ENCODE measurements at regions of chr1 and their contacts with region 1.

Region 1: DNA sequence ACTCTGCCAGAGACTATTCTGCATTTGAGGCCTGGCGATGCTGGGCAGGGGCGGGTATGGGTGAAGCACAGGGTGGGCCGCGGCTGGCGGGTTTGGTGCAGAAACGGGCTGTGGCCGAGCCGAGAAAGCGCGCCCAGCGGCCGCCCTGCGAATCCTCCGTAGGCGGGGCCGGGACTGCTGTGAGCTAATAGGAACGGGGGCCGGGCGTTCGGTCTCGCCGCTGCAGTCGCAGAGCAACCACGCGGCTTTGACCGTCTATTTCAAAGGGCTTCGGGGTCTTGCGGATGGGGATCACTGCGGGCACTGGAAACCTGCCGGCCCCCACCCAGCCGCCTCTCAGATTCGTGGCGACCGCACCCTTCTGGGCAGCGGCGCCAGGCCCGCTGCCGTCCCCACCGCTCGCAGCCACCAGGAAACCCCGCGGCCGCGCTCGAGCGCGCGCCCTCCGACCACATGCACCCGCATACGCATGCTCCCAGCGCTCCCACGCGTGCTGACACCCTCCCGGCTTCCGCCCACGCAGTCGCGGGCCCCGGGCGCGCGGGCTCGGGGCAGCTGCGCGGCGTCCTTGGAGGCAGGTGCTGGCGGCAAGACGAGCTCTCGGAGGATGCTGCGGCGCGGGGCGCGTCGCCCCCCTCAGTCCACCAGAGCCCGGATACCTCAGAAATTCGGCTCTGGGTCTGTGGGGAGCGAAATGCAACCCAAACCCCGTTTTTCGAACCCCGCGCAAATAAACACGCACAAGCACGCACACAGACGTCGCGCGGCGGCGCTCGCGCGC is 32.6 kb downstream of the DNTTIP2 start:
- DNase-seq: peak; percentile 78 to 91 (median 89)
- ATAC-seq: peak; percentile 71
- H3K4me3 ChIP-seq: peak overlapping the region; percentile 90
- H3K4me3 Mint-ChIP-seq: peak overlapping the region; percentile 86 to 97 (median 91)
- H3K27ac ChIP-seq: peak overlapping the region; percentile 88
- H3K27ac Mint-ChIP-seq: peak overlapping the region; percentile 86 to 100 (median 96)
- H3K4me1 ChIP-seq: peaks cover 4 to 16% of the 10 kb centered on the region in 2 donors
- H3K4me1 Mint-ChIP-seq: peaks cover 15 to 36% (median 24%) of the 10 kb centered on the region in 7 donors
- H3K27me3 ChIP-seq: no peaks in the 10 kb centered on the region
- H3K27me3 Mint-ChIP-seq: peaks cover 0 to 13% (median 0%) of the 10 kb centered on the region in 5 donors

Region 2: DNA sequence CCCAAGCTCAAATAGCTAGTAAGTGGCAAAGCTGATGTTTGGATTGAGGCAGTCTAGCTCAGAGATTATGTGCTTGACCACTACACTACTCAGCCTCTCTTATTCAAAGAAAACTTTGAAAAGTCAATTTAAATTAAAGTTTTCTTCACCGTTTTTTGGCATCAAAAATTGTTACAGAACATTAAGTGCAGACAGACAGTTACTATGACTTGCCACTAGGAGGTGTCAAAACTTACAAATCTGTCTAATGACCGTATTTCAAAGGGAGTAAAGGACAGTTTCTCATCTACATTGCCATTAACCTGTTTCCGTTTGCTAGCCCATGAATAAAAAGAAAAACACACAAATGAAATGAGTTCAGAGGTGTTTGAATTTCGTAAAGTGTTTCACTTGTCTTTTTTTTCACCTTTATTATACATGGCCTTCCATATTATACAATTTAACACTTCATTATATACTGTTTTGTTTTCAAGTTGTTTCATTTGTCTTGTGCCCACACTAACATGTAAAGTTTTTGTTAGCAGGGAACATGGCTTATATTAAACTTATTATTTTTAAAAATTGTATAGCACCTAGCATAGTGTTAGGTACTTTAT is 824.8 kb before region 1 on chr1:
- CTCF ChIA-PET with region 1: no interaction called
- POLR2A ChIA-PET with region 1: interaction called, 3 read pairs
- intact Hi-C with region 1: loop called in 1 of 2 experiments (anchors 1 kb)
- DNase-seq: peak in 7 of 9 donors; percentile 16 to 64 (median 55)
- ATAC-seq: peak; percentile 78
- H3K4me3 ChIP-seq: no peak overlapping the region
- H3K4me3 Mint-ChIP-seq: no peak overlapping the region
- H3K27ac ChIP-seq: no peak overlapping the region
- H3K27ac Mint-ChIP-seq: no peak overlapping the region
- H3K4me1 ChIP-seq: peaks cover 0 to 4% of the 10 kb centered on the region in 2 donors
- H3K4me1 Mint-ChIP-seq: peaks cover 0 to 7% (median 5%) of the 10 kb centered on the region in 7 donors
- H3K27me3 ChIP-seq: no peaks in the 10 kb centered on the region
- H3K27me3 Mint-ChIP-seq: peaks cover 0 to 48% (median 3%) of the 10 kb centered on the region in 5 donors

Region 3: GRCh38 chr1:93179886-93180722 is 666.3 kb before region 1 on chr1 and contains the start of gene TMED5:
- CTCF ChIA-PET with region 1: no interaction called
- POLR2A ChIA-PET with region 1: no interaction called
- intact Hi-C with region 1: loop called (anchors 1 to 2 kb)
- DNase-seq: peak; percentile 94 to 97 (median 96)
- ATAC-seq: peak; percentile 89
- H3K4me3 ChIP-seq: peak within 1 kb of the TSS; percentile 95
- H3K4me3 Mint-ChIP-seq: peak within 1 kb of the TSS; percentile 91 to 98 (median 94)
- H3K27ac ChIP-seq: peak within 1 kb of the TSS; percentile 91
- H3K27ac Mint-ChIP-seq: peak within 1 kb of the TSS; percentile 86 to 99 (median 97)
- H3K4me1 ChIP-seq: peaks cover 24 to 30% of the 10 kb centered on the region in 2 donors
- H3K4me1 Mint-ChIP-seq: peaks cover 30 to 59% (median 47%) of the 10 kb centered on the region in 7 donors
- H3K27me3 ChIP-seq: no peaks in the 10 kb centered on the region
- H3K27me3 Mint-ChIP-seq: no peaks in the 10 kb centered on the region
- total RNA-seq, gene TMED5: 37.8 to 60.0 (median 47.4) TPM

Region 4: DNA sequence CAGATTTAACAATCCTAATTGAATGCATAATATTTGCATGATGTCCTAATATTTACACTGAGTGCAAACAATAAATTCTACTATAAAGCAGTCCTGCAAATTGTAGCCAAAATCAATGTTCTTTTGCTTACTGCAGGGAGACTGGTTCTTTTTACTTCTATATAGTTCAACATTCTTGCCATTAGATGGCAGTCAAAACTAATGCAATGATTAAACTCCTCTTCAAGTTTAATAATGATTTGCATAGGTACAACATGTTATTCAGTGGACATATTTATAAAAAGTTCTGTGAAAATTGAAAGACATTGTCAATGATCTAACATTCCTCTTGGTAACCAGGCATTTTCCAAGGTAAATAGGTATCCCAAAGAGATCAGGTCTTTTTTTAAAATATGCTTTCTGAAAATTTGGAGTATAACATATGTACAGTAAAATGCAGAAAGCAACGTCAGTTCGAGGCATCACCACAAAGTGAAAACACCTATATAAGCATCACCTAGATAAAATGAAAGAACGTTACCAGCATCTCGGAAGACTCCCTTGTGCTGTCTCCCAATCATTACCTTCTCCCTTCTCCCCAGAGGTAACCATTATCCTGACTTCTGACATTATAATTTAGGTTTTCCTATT is 408.3 kb before region 1 on chr1:
- CTCF ChIA-PET with region 1: interaction called, 3 read pairs
- POLR2A ChIA-PET with region 1: no interaction called
- intact Hi-C with region 1: loop called (anchors 1 to 2 kb)
- DNase-seq: peak in 5 of 9 donors; percentile 24 to 48 (median 27)
- ATAC-seq: peak; percentile 61
- H3K4me3 ChIP-seq: no peak overlapping the region
- H3K4me3 Mint-ChIP-seq: no peak overlapping the region
- H3K27ac ChIP-seq: no peak overlapping the region
- H3K27ac Mint-ChIP-seq: no peak overlapping the region
- H3K4me1 ChIP-seq: no peaks in the 10 kb centered on the region
- H3K4me1 Mint-ChIP-seq: peaks cover 0 to 2% (median 0%) of the 10 kb centered on the region in 7 donors
- H3K27me3 ChIP-seq: peaks cover 0 to 4% of the 10 kb centered on the region in 2 donors
- H3K27me3 Mint-ChIP-seq: peaks cover 0 to 35% (median 7%) of the 10 kb centered on the region in 5 donors

Region 5: DNA sequence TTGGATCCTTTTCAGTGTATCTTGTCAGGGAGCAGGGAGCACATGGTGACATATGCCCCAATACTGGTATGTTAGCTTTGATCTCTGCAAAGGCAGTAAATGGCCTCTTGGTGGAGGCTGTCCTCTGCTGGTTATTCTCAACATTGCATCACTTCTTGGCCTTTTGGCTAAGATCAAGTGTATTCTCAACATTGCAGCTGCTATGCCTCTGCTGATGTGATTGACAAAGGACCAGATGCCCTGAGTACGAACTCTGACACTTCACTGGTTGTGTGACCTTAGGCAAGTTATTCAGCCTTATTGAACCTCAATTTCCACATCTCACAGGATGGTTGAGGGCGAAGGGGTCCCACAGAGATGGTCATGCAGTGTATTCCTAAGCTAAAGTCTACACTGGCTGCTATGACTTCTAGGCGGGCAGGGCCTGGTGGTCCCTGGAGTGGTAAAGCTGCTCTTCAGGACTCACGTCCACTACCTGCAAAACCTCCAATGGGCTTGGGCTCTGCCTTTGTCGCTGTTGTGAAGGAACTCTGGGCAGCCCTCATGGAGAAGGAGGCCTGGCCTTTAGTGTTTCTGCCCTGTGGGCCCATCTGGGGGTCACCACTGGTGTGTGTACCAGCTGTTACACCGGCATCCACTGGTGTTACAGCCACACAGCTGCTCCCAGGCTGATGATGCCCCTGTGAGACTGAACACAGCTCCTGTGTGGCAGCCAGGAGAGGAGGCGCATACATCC is 32.2 kb before region 1 on chr1:
- CTCF ChIA-PET with region 1: interaction called, 8 read pairs
- POLR2A ChIA-PET with region 1: interaction called, 3 read pairs
- intact Hi-C with region 1: loop called (anchors 2 kb)
- DNase-seq: peak in 8 of 9 donors; percentile 18 to 55 (median 36)
- ATAC-seq: peak; percentile 70
- H3K4me3 ChIP-seq: no peak overlapping the region
- H3K4me3 Mint-ChIP-seq: no peak overlapping the region
- H3K27ac ChIP-seq: no peak overlapping the region
- H3K27ac Mint-ChIP-seq: no peak overlapping the region
- H3K4me1 ChIP-seq: peaks cover 0 to 11% of the 10 kb centered on the region in 2 donors
- H3K4me1 Mint-ChIP-seq: peaks cover 19 to 23% (median 21%) of the 10 kb centered on the region in 7 donors
- H3K27me3 ChIP-seq: no peaks in the 10 kb centered on the region
- H3K27me3 Mint-ChIP-seq: peaks cover 0 to 2% (median 0%) of the 10 kb centered on the region in 5 donors

Region 6: DNA sequence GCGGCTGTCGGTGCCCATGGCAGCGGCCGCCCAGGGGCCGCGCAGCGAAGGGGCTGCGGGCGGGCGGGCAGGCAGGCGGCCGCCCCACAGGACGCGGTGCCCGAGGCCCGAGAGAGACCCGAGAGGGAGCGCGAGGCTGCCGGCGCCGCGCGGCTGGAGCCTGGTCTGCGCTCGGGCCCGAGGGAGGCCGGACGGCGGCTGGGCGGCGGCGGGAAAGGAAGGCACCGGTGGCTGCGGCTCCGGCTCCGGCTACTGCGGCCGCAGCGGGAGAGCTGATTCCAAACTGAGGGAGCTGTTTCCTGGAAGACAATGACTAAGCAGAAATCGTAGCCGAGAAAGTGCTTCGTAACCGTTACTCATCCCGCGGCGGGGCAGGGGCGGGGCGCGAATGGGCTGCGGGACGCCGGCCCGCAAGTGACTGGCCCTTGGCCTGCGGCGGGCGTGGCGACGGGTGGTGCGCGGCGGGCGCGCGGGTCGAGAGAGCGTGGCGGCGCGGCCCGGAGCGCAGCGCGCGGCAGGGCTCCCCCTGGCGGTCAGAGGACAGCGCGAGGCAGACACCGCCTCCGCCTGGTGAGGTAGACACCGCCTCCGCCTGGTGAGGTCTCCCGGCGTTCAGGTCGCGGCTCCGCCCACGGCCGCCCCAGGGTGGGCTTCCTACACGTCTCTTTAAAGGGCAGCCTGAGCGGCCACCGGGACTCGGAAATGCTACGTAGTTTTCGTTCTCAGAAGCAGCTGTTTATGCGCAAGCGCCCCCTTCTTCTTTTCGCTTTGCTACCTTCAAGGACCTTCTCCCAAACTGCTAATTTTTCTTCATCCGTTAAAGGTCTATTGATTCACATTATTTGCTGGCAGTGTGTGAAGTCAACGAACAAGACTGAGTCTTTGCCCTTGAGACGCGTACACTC is 63.0 kb after region 1 on chr1 and contains the start of gene GCLM:
- CTCF ChIA-PET with region 1: interaction called, 19 read pairs
- POLR2A ChIA-PET with region 1: interaction called, 26 read pairs
- intact Hi-C with region 1: loop called (anchors 1 kb)
- DNase-seq: peak; percentile 81 to 97 (median 88)
- ATAC-seq: peak; percentile 98
- H3K4me3 ChIP-seq: peak within 1 kb of the TSS; percentile 61
- H3K4me3 Mint-ChIP-seq: peak within 1 kb of the TSS; percentile 86 to 99 (median 90)
- H3K27ac ChIP-seq: peak within 1 kb of the TSS; percentile 73
- H3K27ac Mint-ChIP-seq: peak within 1 kb of the TSS; percentile 60 to 94 (median 90)
- H3K4me1 ChIP-seq: peaks cover 9 to 13% of the 10 kb centered on the region in 2 donors
- H3K4me1 Mint-ChIP-seq: peaks cover 19 to 38% (median 33%) of the 10 kb centered on the region in 7 donors
- H3K27me3 ChIP-seq: no peaks in the 10 kb centered on the region
- H3K27me3 Mint-ChIP-seq: peaks cover 0 to 30% (median 0%) of the 10 kb centered on the region in 5 donors
- total RNA-seq, gene GCLM: 6.4 to 23.8 (median 11.5) TPM

Region 7: DNA sequence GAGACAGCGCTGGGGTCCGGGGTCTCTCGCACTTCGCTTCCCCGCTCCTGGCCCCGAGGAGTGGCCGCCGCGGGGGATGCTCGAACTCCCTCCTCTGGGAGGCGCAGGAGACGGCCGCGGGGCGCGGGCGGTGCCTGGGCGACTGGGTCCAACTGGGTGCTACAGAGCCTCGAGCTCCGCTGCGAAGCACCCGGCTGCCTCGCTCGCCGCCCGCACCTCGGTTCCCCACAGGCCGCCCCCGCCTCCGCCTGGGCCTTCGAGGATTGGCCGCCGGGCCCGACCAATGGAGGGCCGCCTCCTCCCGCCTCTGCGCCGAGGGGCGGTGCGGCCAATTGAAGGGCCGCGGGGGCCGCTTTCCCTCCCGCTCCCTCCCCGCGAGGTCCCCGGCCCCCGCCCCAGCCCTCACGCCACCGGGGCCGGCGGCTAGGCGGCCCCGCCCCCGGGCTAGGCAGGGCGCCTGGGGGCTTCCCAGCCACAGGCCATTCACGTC is 1080.6 kb after region 1 on chr1 and contains the start of gene CNN3:
- CTCF ChIA-PET with region 1: no interaction called
- POLR2A ChIA-PET with region 1: no interaction called
- intact Hi-C with region 1: loop called in 1 of 2 experiments (anchors 2 kb)
- DNase-seq: peak; percentile 56 to 78 (median 68)
- ATAC-seq: peak; percentile 91
- H3K4me3 ChIP-seq: peak within 1 kb of the TSS; percentile 39
- H3K4me3 Mint-ChIP-seq: peak within 1 kb of the TSS; percentile 88 to 97 (median 94)
- H3K27ac ChIP-seq: peak within 1 kb of the TSS; percentile 63
- H3K27ac Mint-ChIP-seq: peak within 1 kb of the TSS; percentile 37 to 92 (median 84)
- H3K4me1 ChIP-seq: no peaks in the 10 kb centered on the region
- H3K4me1 Mint-ChIP-seq: peaks cover 12 to 38% (median 34%) of the 10 kb centered on the region in 7 donors
- H3K27me3 ChIP-seq: no peaks in the 10 kb centered on the region
- H3K27me3 Mint-ChIP-seq: peaks cover 18 to 57% (median 26%) of the 10 kb centered on the region in 5 donors
- total RNA-seq, gene CNN3: 4.4 to 14.9 (median 7.4) TPM

Measured in naive thymus-derived CD4-positive, alpha-beta T cell (primary cell).